ENCODE measurements at regions of chr6 and their contacts with region 1.

Region 1: GRCh38 chr6:42984001-42984923 is at the start of gene PPP2R5D:
- DNase-seq: peak; percentile 94 to 98
- ATAC-seq: peak; percentile 91 to 98 (median 93)
- H3K4me3 ChIP-seq: peak within 1 kb of the TSS; percentile 75
- H3K4me3 Mint-ChIP-seq: peak within 1 kb of the TSS; percentile 95
- H3K27ac ChIP-seq: peak within 1 kb of the TSS; percentile 76
- H3K27ac Mint-ChIP-seq: peak within 1 kb of the TSS; percentile 94 to 95
- H3K4me1 ChIP-seq: peaks cover 36% of the 10 kb centered on the region
- H3K4me1 Mint-ChIP-seq: peaks cover 48 to 52% of the 10 kb centered on the region in 2 donors
- H3K27me3 ChIP-seq: no peaks in the 10 kb centered on the region
- H3K27me3 Mint-ChIP-seq: no peaks in the 10 kb centered on the region
- CTCF ChIP-seq: no peak
- total RNA-seq, gene PPP2R5D: 30.5 to 49.1 (median 40.1) TPM

Region 2: GRCh38 chr6:42269553-42269952 is 714.7 kb before region 1 on chr6:
- intact Hi-C with region 1: no loop called
- DNase-seq: peak in 1 of 2 donors; percentile 47
- ATAC-seq: peak; percentile 56 to 69 (median 61)
- H3K4me3 ChIP-seq: no peak overlapping the region
- H3K4me3 Mint-ChIP-seq: no peak overlapping the region
- H3K27ac ChIP-seq: peak overlapping the region; percentile 28
- H3K27ac Mint-ChIP-seq: peak overlapping the region in 1 of 2 donors; percentile 68
- H3K4me1 ChIP-seq: peaks cover 19% of the 10 kb centered on the region
- H3K4me1 Mint-ChIP-seq: peaks cover 26 to 39% of the 10 kb centered on the region in 2 donors
- H3K27me3 ChIP-seq: no peaks in the 10 kb centered on the region
- H3K27me3 Mint-ChIP-seq: no peaks in the 10 kb centered on the region
- CTCF ChIP-seq: no peak

Region 3: DNA sequence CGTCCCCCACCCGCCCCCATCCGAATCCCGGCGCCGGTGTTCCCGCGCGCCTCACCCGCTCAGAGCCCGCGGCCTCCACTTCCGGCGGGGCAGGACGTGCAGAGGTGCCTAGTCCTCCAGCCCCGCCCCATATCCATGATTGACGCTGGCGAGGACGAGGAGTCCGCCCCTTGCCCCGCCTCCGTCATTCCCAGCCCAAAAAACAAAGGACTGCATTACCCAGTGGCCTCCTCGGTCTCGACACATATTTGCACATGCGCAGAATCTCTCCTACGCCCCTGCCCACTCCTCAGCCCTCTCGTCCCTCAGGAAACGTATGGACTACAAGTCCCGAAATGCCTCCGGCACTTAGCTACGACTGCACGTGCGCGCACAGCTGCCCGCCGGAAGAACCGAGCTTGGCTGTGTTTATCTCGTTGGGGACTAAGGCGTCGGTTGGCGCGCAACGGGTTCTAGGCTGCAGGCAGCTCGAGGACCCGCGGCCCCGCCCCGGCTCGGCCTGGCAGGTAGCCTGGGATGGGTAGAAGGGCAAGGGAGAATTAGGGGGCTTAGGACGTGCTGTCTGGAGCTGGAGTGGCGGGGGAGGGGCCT is 29.7 kb after region 1 on chr6 and contains the starts of genes KLHDC3 and MEA1:
- intact Hi-C with region 1: loop called (anchors 1 kb)
- DNase-seq: peak; percentile 86 to 99
- ATAC-seq: peak; percentile 90 to 97 (median 90)
- H3K4me3 ChIP-seq: peak within 1 kb of the TSS; percentile 78
- H3K4me3 Mint-ChIP-seq: peak within 1 kb of the TSS; percentile 97
- H3K27ac ChIP-seq: peak within 1 kb of the TSS; percentile 56
- H3K27ac Mint-ChIP-seq: peak within 1 kb of the TSS; percentile 87 to 93
- H3K4me1 ChIP-seq: peaks cover 40% of the 10 kb centered on the region
- H3K4me1 Mint-ChIP-seq: peaks cover 38 to 59% of the 10 kb centered on the region in 2 donors
- H3K27me3 ChIP-seq: no peaks in the 10 kb centered on the region
- H3K27me3 Mint-ChIP-seq: no peaks in the 10 kb centered on the region
- CTCF ChIP-seq: no peak
- total RNA-seq, gene KLHDC3: 52.7 to 60.9 (median 53.7) TPM
- total RNA-seq, gene MEA1: 29.6 to 34.3 (median 34.2) TPM

Region 4: GRCh38 chr6:43021270-43022047 is 37.2 kb after region 1 on chr6 and contains the start of gene RRP36:
- intact Hi-C with region 1: loop called (anchors 1 kb)
- DNase-seq: peak; percentile 47 to 81
- ATAC-seq: peak; percentile 84 to 87 (median 85)
- H3K4me3 ChIP-seq: peak within 1 kb of the TSS; percentile 89
- H3K4me3 Mint-ChIP-seq: peak within 1 kb of the TSS; percentile 94
- H3K27ac ChIP-seq: peak within 1 kb of the TSS; percentile 63
- H3K27ac Mint-ChIP-seq: peak within 1 kb of the TSS; percentile 78 to 80
- H3K4me1 ChIP-seq: peaks cover 28% of the 10 kb centered on the region
- H3K4me1 Mint-ChIP-seq: peaks cover 22 to 41% of the 10 kb centered on the region in 2 donors
- H3K27me3 ChIP-seq: no peaks in the 10 kb centered on the region
- H3K27me3 Mint-ChIP-seq: no peaks in the 10 kb centered on the region
- CTCF ChIP-seq: no peak
- total RNA-seq, gene RRP36: 33.1 to 43.9 (median 38.7) TPM

Measured in natural killer cell (primary cell).